Activated naive CD4-positive, alpha-beta T cell treated with anti-CD3 and anti-CD28 coated beads for 36 hours (primary cell): ENCODE measurements at regions of chr3 and their contacts with region 1.

Region 1: DNA sequence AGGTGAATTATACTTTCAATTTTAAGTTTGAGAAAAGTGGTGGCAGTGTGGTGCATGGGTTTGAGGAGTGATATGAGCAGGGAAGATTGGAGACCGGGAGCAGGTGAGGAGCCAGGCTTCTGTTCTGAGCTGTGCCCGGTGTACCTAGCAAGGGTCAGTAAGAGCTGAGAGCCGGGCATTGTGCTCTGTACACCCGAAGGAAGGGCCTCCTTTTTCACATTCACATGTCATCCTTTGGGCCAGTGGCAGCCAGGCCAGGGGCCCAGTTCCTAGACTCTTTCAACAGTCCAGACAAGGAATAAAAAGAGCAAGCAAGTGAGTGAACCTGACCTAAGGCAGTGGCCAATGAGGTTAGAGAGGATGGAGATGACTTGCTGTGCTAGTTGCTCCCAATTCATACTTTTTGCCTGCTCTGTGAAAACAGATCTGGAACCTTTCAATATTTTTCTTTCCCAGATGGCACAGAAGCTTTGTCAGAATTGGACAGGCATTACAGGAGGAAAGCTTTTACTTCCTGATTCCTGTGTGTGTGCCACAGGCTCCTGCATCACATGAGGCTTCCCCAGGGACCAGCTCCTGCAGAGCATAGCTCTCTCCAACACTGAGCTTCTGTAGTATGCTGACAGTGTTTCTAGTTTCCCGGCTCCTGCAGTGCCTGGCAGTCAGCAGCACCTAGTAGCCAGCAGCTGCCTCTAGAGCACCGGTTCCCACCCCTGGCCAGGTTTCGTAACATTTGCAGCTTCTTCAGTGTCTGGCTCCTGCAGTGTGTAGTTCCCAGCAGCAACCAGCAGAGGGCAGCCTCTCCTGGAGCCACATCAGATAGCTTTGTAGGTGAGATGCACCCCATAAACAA is 5.3 kb upstream of the TRA2B start:
- DNase-seq: peak; percentile 92
- H3K4me3 Mint-ChIP-seq: peak overlapping the region; percentile 28
- H3K27ac Mint-ChIP-seq: no peak overlapping the region
- H3K4me1 Mint-ChIP-seq: peaks cover 17% of the 10 kb centered on the region
- H3K27me3 Mint-ChIP-seq: no peaks in the 10 kb centered on the region

Region 2: DNA sequence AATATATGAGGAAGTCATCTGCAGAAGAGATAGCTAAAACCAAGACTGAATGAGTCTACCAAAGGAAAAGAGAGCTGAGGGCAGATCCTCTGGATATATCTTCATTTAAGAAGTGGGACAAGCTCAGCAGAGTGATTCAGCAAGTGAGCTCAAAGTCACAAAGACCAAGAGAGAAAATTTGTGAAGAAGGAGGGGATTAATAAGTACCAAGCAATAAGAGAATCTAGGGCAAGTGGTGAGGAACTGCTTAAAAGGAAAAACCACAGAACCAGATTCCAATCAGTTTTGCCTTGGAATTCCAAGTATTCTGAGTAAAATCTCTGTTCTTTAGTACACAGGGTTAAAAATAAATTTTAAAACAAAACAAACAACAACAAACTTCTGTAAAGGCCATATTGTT is 692.9 kb before region 1 on chr3:
- CTCF ChIA-PET with region 1: no interaction called
- intact Hi-C with region 1: no loop called
- DNase-seq: no peak
- H3K4me3 Mint-ChIP-seq: no peak overlapping the region
- H3K27ac Mint-ChIP-seq: no peak overlapping the region
- H3K4me1 Mint-ChIP-seq: peaks cover 4% of the 10 kb centered on the region
- H3K27me3 Mint-ChIP-seq: peaks cover 12% of the 10 kb centered on the region

Region 3: GRCh38 chr3:185595526-185595925 is 347.6 kb before region 1 on chr3:
- CTCF ChIA-PET with region 1: no interaction called
- intact Hi-C with region 1: no loop called
- DNase-seq: no peak
- H3K4me3 Mint-ChIP-seq: no peak overlapping the region
- H3K27ac Mint-ChIP-seq: peak overlapping the region; percentile 73
- H3K4me1 Mint-ChIP-seq: peaks cover 8% of the 10 kb centered on the region
- H3K27me3 Mint-ChIP-seq: no peaks in the 10 kb centered on the region

Region 4: GRCh38 chr3:185929192-185930151 is 13.7 kb before region 1 on chr3:
- CTCF ChIA-PET with region 1: interaction called, 24 read pairs
- intact Hi-C with region 1: no loop called
- DNase-seq: no peak
- H3K4me3 Mint-ChIP-seq: peak overlapping the region; percentile 70
- H3K27ac Mint-ChIP-seq: peak overlapping the region; percentile 78
- H3K4me1 Mint-ChIP-seq: peaks cover 85% of the 10 kb centered on the region
- H3K27me3 Mint-ChIP-seq: no peaks in the 10 kb centered on the region

Region 5: GRCh38 chr3:185959609-185960517 is 16.7 kb after region 1 on chr3:
- CTCF ChIA-PET with region 1: interaction called, 120 read pairs
- intact Hi-C with region 1: loop called (anchors 1 kb)
- DNase-seq: peak; percentile 38
- H3K4me3 Mint-ChIP-seq: no peak overlapping the region
- H3K27ac Mint-ChIP-seq: no peak overlapping the region
- H3K4me1 Mint-ChIP-seq: peaks cover 9% of the 10 kb centered on the region
- H3K27me3 Mint-ChIP-seq: no peaks in the 10 kb centered on the region

Region 6: DNA sequence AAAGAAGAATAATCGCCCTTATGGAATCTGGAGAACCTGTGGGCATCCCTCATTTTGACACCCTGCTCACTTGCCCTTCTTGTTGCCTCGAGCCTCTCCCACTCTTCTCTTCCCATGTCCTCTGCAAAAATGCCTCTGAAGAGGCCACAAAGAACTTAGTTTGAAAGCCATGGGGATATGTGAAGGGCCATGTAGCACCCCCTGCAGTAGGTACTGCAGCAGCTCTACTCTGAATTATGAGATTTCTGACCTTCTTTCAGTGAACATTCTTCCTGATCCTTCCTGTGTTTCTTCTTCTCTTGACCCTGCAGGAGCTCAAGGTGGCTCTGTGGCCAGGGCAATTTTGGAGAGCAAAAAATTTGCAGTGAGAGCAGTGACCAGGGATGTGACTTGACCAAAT is 25.0 kb after region 1 on chr3:
- CTCF ChIA-PET with region 1: interaction called, 35 read pairs
- intact Hi-C with region 1: no loop called
- DNase-seq: no peak
- H3K4me3 Mint-ChIP-seq: no peak overlapping the region
- H3K27ac Mint-ChIP-seq: no peak overlapping the region
- H3K4me1 Mint-ChIP-seq: no peaks in the 10 kb centered on the region
- H3K27me3 Mint-ChIP-seq: no peaks in the 10 kb centered on the region

Region 7: GRCh38 chr3:185983495-185984141 is 40.5 kb after region 1 on chr3:
- CTCF ChIA-PET with region 1: interaction called, 31 read pairs
- intact Hi-C with region 1: no loop called
- DNase-seq: peak; percentile 67
- H3K4me3 Mint-ChIP-seq: no peak overlapping the region
- H3K27ac Mint-ChIP-seq: peak overlapping the region; percentile 41
- H3K4me1 Mint-ChIP-seq: peaks cover 3% of the 10 kb centered on the region
- H3K27me3 Mint-ChIP-seq: peaks cover 8% of the 10 kb centered on the region

Region 8: GRCh38 chr3:186241910-186242821 is 299.0 kb after region 1 on chr3:
- CTCF ChIA-PET with region 1: no interaction called
- intact Hi-C with region 1: loop called (anchors 1 kb)
- DNase-seq: peak; percentile 87
- H3K4me3 Mint-ChIP-seq: peak overlapping the region; percentile 17
- H3K27ac Mint-ChIP-seq: no peak overlapping the region
- H3K4me1 Mint-ChIP-seq: peaks cover 7% of the 10 kb centered on the region
- H3K27me3 Mint-ChIP-seq: peaks cover 7% of the 10 kb centered on the region